ENCODE measurements at regions of chr1 and their contacts with region 1.

Region 1: GRCh38 chr1:165717918-165718515 is 19.7 kb upstream of the ALDH9A1 start:
- DNase-seq: peak in 2 of 5 donors; percentile 4 to 7
- H3K4me3 ChIP-seq: no peak overlapping the region
- H3K4me3 Mint-ChIP-seq: no peak overlapping the region
- H3K27ac ChIP-seq: no peak overlapping the region
- H3K27ac Mint-ChIP-seq: peak overlapping the region in 1 of 8 donors; percentile 2
- H3K4me1 ChIP-seq: no peaks in the 10 kb centered on the region
- H3K4me1 Mint-ChIP-seq: no peaks in the 10 kb centered on the region
- H3K27me3 ChIP-seq: no peaks in the 10 kb centered on the region
- H3K27me3 Mint-ChIP-seq: no peaks in the 10 kb centered on the region

Region 2: DNA sequence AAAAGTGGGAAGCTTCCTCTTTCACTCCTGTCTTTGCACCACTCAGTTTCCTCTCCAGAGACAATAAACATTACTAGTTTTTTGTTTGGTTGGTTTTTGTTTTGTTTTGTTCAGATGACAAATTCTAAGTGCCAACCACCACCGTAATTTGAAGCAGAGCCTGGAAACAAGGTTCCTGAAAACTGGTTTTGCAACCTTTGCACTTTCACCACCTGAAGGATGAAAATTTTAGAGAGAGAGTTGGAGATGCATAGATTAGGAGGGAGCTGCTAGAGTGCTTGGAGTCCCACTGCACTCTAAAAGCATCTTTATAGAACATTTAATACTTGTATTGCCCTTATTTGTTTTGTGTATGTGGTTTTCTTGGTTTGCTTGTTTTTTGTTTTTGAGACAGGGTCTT is 107.1 kb before region 1 on chr1:
- CTCF ChIA-PET with region 1: no interaction called
- POLR2A ChIA-PET with region 1: interaction called, 12 read pairs
- DNase-seq: no peak
- H3K4me3 ChIP-seq: no peak overlapping the region
- H3K4me3 Mint-ChIP-seq: no peak overlapping the region
- H3K27ac ChIP-seq: no peak overlapping the region
- H3K27ac Mint-ChIP-seq: no peak overlapping the region
- H3K4me1 ChIP-seq: no peaks in the 10 kb centered on the region
- H3K4me1 Mint-ChIP-seq: no peaks in the 10 kb centered on the region
- H3K27me3 ChIP-seq: no peaks in the 10 kb centered on the region
- H3K27me3 Mint-ChIP-seq: peaks cover 13 to 49% of the 10 kb centered on the region in 2 donors

Measured in CD8-positive, alpha-beta memory T cell (primary cell).